Activated naive CD4-positive, alpha-beta T cell treated with anti-CD3 and anti-CD28 coated beads for 36 hours (primary cell): ENCODE measurements at regions of chr9 and their contacts with region 1.

Region 1: DNA sequence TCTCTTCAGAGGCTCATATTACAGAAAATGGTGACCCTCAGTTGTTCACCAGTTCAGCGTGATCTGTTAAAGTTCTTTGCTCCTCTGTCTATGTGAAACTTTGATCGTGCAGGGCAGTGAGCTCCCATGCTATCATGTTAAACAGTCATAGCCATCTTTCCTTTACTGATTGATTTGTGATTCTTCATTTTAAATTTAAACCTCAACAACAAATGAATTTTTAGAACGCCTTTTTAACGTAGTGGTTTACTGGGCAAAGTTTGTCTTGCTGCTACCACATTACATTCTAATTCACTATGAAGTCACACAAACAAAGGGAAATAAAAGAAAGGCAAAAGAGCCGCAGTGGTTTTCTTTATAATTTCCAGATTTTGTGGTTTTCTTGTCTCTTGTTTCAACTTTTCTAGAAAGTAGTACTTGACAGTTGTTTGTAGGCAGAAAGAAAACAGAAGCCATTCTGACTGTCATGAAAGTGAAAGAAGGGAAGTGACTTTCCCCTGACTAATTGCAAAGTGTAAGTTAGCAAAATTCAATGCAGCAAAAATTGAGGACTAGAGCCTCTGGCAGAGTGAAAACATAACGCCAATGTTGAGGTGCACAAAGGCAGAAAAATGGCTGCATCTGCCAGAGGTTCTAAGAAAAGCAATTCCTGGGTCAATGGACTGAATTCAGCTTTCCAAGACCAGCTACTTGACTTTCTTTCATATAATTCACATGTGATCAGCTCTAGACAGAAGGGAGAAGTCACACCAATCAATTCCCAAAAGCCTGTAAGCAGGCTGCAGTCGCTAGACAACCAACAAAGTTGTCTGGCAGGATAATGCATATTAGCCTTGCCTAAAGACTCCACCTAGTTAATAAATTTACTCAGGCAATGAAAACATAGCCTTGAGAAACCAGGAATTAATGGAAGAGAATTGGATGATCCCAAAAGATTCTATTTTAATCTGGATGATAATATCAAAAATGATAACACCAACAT is 7.1 kb upstream of the IFNA6 start:
- DNase-seq: peak; percentile 28
- H3K4me3 Mint-ChIP-seq: peak overlapping the region; percentile 36
- H3K27ac Mint-ChIP-seq: no peak overlapping the region
- H3K4me1 Mint-ChIP-seq: peaks cover 19% of the 10 kb centered on the region
- H3K27me3 Mint-ChIP-seq: peaks cover 13% of the 10 kb centered on the region

Region 2: DNA sequence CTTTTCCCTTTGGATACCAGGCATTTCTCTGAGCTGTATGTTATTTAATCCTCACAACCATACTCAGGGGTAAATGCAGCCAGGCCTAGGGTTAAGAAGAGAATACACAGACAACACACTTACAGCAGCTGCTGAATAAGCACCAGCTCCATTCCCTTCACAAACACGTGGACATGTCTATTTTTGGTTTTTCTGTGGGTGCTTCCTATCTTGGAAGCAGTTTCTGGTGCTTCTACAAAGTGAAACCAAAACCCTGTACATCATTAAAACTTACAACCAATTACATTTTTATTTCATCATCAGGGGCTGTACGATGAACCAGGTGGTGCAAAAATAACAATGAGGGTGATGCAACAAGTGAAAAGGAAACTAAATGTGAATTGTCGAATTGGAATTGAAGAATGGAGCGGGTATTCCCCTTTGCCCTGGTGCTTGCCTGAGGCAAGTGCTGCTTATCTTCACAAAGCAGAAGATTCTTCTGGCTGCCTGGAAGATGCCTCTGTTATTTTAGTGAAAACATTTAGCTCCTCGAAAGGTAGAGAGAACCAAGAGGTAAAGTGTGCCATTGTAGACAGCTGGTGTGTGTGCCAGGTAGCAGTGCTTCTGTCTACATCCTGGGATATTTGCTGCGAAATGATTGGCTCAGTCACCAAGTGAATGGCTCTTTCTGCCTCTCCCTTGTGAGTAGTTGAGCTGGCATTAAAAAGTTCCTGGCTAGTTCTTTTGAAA is 261.4 kb before region 1 on chr9:
- CTCF ChIA-PET with region 1: no interaction called
- intact Hi-C with region 1: loop called (anchors 1 kb)
- DNase-seq: peak; percentile 67
- H3K4me3 Mint-ChIP-seq: peak overlapping the region; percentile 76
- H3K27ac Mint-ChIP-seq: peak overlapping the region; percentile 94
- H3K4me1 Mint-ChIP-seq: peaks cover 39% of the 10 kb centered on the region
- H3K27me3 Mint-ChIP-seq: no peaks in the 10 kb centered on the region

Region 3: DNA sequence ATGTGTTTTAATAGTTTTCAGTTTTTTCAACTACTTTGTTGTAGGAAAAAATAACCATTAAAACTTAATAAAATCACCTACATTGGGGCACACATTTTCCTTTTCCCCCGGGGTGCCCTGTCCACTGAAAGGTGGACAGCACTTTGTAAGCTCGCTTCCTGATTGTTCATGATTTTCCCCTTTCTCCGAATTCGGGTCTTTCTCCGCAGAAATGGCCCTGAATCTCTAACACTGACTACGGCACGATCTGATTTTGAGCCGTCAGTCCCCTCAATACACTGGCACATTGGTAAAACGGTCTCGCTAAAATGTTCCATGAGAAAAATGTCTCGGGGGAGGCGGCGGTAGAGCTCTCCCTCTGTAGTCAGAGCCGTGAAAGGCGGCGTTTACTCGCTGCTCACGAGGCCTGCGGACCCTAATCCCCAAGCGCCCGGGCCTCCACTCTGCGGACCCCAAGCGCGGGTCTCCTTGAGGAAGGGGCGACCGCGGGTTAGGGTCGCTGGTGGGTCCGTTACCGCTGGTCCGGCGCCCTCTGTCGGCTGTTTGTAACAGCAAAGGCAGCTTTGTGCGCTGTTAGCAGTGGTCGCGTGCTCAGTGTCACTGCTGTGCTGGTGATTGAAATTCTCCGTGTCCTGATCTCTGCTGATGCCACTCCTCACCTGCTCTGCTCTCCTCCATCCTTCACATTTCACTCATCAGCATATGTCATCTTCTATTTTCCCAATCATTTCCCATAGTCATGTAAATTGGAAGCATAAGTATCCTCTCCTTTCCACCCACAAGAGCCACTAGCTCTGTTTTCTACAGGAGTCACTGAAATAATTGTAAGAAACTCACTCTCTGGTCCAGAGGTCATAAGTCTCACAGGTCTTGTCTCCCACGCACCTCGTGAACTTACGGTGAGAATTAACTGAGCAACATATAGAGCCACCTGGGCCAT is 38.3 kb after region 1 on chr9:
- CTCF ChIA-PET with region 1: interaction called, 5 read pairs
- intact Hi-C with region 1: loop called (anchors 5 kb)
- DNase-seq: peak; percentile 64
- H3K4me3 Mint-ChIP-seq: peak overlapping the region; percentile 50
- H3K27ac Mint-ChIP-seq: no peak overlapping the region
- H3K4me1 Mint-ChIP-seq: peaks cover 9% of the 10 kb centered on the region
- H3K27me3 Mint-ChIP-seq: peaks cover 39% of the 10 kb centered on the region

Region 4: GRCh38 chr9:21624675-21625644 is 267.2 kb after region 1 on chr9:
- CTCF ChIA-PET with region 1: no interaction called
- intact Hi-C with region 1: loop called (anchors 5 kb)
- DNase-seq: peak; percentile 26
- H3K4me3 Mint-ChIP-seq: no peak overlapping the region
- H3K27ac Mint-ChIP-seq: peak overlapping the region; percentile 42
- H3K4me1 Mint-ChIP-seq: peaks cover 34% of the 10 kb centered on the region
- H3K27me3 Mint-ChIP-seq: no peaks in the 10 kb centered on the region

Region 5: DNA sequence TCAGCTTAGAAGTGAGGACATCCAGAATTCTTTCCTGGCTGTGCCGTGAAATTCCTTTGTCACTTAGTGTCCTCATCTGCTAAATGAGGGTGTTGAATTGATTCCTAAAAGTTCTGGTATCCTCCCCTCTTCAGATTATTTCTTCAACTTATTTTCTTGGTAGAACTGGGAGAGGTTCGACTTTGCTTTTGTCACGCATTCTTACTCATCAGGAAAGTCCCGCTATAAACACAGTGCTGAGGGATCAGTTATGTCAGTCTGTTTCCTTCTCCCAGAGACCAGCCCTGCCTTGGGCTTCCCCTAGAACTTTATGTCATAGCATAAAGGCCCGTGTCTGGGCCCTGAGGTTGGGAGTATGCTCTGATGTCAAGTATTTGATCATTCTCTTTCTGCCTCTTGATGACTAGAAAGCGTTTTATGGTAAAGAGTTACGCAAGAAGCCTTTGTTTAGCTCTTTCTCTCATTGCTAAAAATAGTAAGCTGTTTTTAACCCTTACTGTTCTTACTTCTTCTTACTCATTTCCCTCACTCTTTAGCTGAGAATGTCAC is 474.3 kb after region 1 on chr9:
- CTCF ChIA-PET with region 1: no interaction called
- intact Hi-C with region 1: loop called (anchors 1 kb)
- DNase-seq: peak; percentile 83
- H3K4me3 Mint-ChIP-seq: no peak overlapping the region
- H3K27ac Mint-ChIP-seq: peak overlapping the region; percentile 77
- H3K4me1 Mint-ChIP-seq: peaks cover 65% of the 10 kb centered on the region
- H3K27me3 Mint-ChIP-seq: no peaks in the 10 kb centered on the region